ENCODE measurements at regions of chr2 and their contacts with region 1.

Region 1: DNA sequence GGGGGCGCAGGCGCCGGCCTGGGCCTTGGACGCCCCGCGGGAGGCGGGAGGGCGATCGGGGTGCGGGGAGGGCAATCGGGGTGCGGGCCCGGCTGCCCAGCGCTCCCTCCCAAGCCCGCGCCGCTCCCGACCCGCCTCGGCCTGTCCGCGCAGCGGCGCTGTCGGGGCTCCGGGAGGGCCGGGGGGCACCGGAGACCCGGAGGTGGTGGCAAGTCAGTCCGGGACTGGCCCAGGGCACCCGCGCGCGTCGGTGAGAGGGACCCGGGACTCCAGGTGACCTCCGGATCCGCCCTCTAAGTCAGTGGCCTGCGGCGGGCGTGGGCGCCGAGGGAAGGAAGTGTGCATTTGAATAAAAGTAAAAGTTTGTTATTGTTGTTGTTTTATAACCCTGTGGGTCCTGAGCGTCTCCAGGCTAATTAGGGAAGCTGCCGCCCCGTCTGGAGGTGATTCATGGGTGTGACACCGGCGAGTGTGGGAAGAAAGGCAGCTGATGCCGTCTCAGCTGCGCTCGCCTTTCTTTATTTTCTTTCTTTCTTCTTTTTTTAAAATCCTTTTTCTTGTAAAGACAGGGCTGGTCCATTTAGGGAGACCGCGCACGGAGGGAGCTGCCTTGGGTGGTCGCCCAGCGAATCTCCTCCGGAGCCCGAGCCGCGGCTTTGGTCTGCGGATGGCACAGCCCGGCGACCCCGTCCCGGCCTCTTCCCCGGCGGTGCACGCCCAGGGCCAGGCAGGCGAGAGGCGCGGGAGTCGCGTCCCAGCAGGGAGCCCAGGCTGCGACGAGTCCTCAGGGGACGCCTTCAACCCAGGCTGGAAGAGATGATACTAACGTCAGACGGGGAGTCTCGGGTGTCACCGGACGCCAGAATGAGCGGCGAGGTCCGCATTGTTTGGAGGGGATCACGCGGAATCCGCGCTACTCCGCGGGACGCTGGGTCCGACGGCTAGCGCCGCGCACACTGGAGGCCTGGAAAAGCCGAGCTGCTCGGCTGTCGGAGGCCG is 627 bp upstream of the CRACDL start:
- DNase-seq: peak; percentile 62
- ATAC-seq: peak; percentile 52
- H3K4me3 Mint-ChIP-seq: peak overlapping the region; percentile 67
- H3K27ac Mint-ChIP-seq: no peak overlapping the region
- H3K4me1 Mint-ChIP-seq: peaks cover 5% of the 10 kb centered on the region
- H3K27me3 Mint-ChIP-seq: peaks cover 43% of the 10 kb centered on the region
- CTCF ChIP-seq: peak; percentile 13

Region 2: GRCh38 chr2:98637401-98638147 is 299.1 kb before region 1 on chr2:
- CTCF ChIA-PET with region 1: no interaction called
- POLR2A ChIA-PET with region 1: no interaction called
- intact Hi-C with region 1: no loop called
- DNase-seq: peak; percentile 75
- ATAC-seq: peak; percentile 79
- H3K4me3 Mint-ChIP-seq: peak overlapping the region; percentile 51
- H3K27ac Mint-ChIP-seq: peak overlapping the region; percentile 88
- H3K4me1 Mint-ChIP-seq: peaks cover 40% of the 10 kb centered on the region
- H3K27me3 Mint-ChIP-seq: no peaks in the 10 kb centered on the region
- CTCF ChIP-seq: no peak

Region 3: DNA sequence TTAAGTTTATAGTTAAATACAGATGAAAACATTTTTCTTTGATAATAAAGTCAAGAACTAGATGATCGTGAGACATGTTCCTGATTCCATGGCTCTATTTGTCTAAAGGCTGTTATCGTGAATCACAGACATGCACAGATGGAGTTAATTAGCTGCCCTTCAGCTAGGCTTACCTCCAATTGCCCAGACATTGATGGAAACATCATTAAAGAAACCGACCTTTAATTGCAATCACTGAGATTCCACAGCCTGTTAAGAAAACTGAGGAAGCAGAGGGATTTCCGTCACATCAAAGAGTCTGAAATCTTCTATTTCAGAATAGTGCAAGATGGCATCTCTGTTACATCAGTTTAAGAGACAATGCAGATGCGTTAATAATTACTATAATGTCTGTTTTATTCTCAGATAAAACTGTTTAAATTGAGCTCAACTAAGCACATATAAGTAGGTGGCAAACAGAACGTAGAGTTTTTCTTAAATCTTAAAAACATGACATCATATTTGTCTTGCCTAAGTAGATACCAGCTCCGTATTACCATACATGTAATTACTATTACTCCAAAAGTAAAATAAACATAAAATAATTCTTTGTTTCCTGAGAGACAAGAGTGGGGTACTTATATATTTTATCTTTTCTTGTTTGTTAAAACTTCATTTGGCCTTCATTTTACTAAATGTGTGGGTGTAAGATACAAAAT is 23.3 kb after region 1 on chr2:
- CTCF ChIA-PET with region 1: no interaction called
- POLR2A ChIA-PET with region 1: no interaction called
- intact Hi-C with region 1: no loop called
- DNase-seq: no peak
- ATAC-seq: no peak
- H3K4me3 Mint-ChIP-seq: no peak overlapping the region
- H3K27ac Mint-ChIP-seq: no peak overlapping the region
- H3K4me1 Mint-ChIP-seq: no peaks in the 10 kb centered on the region
- H3K27me3 Mint-ChIP-seq: peaks cover 1% of the 10 kb centered on the region
- CTCF ChIP-seq: no peak

Region 4: DNA sequence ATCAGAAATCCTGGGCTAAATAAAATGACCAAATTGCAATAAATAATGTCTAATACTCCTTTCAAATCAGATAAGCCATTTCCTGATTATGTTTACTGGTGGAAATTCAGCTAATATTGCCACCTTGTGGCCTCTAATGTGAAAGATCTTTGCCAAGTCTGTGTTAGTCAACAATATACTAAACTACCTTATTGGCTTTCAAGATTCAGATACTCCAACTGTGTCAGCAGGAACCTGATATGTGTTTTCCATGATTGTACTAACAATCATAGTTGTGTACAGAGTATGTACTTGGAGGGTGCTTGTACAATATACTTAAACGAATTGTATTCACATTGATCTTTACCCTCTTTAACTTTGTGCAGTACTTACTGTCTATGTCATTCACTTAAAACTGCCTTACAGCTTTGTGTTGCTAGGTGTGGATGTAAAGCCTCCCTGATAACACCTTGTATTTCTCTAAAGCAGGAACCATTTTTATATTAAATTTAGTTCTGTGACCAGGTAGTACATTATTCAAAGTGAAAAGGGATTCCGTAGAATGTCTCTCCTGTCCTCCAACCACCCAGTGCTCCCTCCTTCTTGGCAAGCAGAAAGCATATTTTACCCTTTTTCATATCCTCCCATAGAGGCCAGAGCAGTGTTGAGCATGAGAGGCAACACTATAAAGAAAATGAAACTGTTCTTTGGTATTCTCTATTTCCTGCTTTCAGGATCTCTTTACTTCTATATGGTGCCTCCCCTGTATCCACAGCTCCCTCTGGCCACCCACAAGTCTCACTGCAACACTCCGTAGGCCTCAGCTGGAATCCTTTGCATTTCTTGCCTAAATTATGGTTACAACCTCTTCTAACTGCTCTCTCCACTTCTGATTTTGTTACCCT is 129.7 kb after region 1 on chr2:
- CTCF ChIA-PET with region 1: interaction called, 3 read pairs
- POLR2A ChIA-PET with region 1: no interaction called
- intact Hi-C with region 1: loop called (anchors 5 kb)
- DNase-seq: peak; percentile 49
- ATAC-seq: peak; percentile 95
- H3K4me3 Mint-ChIP-seq: no peak overlapping the region
- H3K27ac Mint-ChIP-seq: no peak overlapping the region
- H3K4me1 Mint-ChIP-seq: no peaks in the 10 kb centered on the region
- H3K27me3 Mint-ChIP-seq: no peaks in the 10 kb centered on the region
- CTCF ChIP-seq: peak; percentile 59